Activated CD4-positive, alpha-beta memory T cell treated with anti-CD3 and anti-CD28 coated beads for 36 hours (primary cell): ENCODE measurements at regions of chr10 and their contacts with region 1.

Region 1: DNA sequence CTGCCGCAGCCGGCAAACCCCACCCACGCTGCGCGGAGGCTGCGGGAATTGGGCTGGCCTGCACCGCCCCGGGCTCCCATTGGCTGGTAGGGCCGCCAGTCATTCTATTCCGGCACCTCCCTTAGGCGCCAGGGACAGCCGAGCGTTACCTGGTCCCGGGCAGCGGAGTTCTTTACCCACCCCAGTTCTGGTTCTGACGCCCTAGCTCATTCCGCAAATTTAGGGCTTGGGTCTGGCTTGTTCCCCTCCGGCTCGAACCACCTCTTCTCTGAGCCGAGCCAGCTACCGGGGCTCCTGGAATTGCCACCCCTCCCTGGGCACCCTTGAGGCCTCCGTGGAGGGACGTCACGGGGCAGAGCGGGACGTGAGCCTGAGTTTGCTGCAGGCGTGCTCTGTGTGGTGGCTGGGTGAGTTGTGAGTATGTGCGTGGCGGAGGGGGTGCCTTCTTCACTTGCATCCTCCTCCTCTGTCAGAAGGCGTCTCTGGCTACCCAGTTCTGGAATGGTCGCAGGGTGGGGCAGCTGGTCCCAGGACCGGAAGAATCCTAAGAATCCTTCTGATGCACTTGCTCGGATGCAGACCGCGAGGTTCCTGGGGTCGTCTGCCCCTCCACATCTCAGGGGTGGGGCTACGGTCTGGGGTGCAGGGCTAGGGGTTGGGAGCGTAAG is at the starts of genes PDZD7 and SFXN3:
- DNase-seq: peak; percentile 98
- H3K4me3 Mint-ChIP-seq: peak within 1 kb of the TSS; percentile 79
- H3K27ac Mint-ChIP-seq: peak within 1 kb of the TSS; percentile 84
- H3K4me1 Mint-ChIP-seq: peaks cover 17% of the 10 kb centered on the region
- H3K27me3 Mint-ChIP-seq: no peaks in the 10 kb centered on the region
- total RNA-seq, gene PDZD7: 0.31 to 0.93 TPM
- total RNA-seq, gene SFXN3: 40.4 to 41.9 TPM

Region 2: GRCh38 chr10:100912605-100913469 is 118.4 kb before region 1 on chr10 and contains the start of gene SLF2:
- CTCF ChIA-PET with region 1: no interaction called
- POLR2A ChIA-PET with region 1: no interaction called
- intact Hi-C with region 1: loop called (anchors 5 kb)
- DNase-seq: peak; percentile 97
- H3K4me3 Mint-ChIP-seq: peak within 1 kb of the TSS; percentile 99
- H3K27ac Mint-ChIP-seq: peak within 1 kb of the TSS; percentile 99
- H3K4me1 Mint-ChIP-seq: peaks cover 47% of the 10 kb centered on the region
- H3K27me3 Mint-ChIP-seq: no peaks in the 10 kb centered on the region
- total RNA-seq, gene SLF2: 33.9 to 35.9 TPM

Region 3: DNA sequence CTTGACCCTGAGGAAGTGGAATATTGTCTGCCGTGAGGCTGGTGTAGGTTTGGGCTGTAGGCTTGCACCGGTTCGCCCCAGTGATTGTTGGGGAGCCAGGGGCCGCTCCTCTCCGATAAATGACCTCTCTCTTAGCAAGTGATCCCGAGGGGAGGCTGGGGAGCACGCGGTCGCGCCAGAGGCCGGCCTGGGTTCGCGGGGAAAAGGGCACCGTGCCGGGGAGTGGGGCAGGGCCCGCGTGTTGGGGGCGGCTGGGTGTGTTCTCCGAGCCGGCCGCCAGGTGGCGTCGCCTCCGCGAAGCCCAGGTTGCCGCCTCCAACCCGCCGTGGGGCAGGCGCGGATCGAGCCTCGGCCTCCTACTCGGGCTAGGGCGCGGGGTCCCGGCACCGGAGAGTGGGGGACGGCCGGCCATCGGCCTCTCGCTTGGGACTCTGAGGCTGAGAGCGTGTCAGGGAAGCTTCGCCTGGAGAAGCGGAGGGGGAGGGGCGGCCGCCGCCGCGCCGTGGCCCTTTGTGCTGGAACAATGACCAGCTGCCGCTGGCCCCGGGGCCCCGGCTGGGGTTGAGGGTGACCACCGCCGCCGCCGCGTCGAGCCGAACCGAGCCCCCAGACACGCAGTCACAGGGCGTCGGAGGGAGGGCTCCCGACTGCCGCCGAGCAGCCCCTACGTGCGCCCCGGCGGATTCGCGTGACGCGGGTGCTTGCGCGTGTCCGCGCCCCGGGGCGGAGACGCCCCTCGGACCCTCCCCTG is 32.1 kb before region 1 on chr10:
- CTCF ChIA-PET with region 1: interaction called, 28 read pairs
- POLR2A ChIA-PET with region 1: interaction called, 6 read pairs
- intact Hi-C with region 1: loop called (anchors 1 kb)
- DNase-seq: peak; percentile 81
- H3K4me3 Mint-ChIP-seq: peak overlapping the region; percentile 76
- H3K27ac Mint-ChIP-seq: peak overlapping the region; percentile 79
- H3K4me1 Mint-ChIP-seq: peaks cover 20% of the 10 kb centered on the region
- H3K27me3 Mint-ChIP-seq: no peaks in the 10 kb centered on the region

Region 4: DNA sequence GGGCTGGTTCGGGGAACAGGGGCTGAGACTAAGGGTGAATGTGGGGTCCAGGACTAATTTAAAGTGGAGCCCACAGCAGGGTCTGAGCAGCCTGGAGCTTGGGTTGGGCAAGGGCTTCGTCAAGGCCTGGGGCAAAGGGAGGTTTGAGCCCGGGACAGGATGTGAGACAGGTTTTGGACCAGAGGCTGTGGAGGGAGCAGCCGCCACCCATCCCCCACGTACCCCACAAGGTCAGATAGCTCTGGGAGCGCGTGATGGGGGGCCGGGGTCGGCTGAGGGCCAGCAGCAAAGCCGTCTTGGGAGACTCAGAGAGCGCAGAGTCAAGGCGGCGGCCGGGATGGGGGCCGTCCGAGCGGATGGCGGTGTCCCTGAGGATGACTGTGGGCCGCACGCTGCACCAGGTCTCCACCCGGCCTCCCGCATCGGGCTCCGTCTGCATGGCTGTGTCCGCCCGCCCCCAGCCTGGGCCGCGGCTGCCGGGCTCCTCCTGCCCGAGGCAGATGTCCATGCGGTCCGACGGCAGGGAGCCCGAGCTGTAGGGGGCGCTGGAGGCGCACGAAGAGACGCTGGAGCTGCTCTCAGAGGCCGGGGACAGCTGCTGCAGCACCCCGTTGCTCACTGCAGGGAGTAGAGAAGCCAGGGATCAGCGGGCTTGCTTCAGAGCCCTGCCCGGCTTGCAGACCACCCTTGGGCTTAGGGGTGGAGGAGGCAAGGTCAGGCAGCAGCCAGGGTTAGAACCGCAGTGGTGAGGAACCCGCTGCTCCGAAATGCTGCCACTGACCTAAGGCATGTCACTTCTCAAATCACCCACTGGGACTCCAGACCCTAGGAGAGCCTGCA is 12.4 kb before region 1 on chr10:
- CTCF ChIA-PET with region 1: interaction called, 137 read pairs
- POLR2A ChIA-PET with region 1: interaction called, 11 read pairs
- intact Hi-C with region 1: no loop called
- DNase-seq: peak; percentile 89
- H3K4me3 Mint-ChIP-seq: no peak overlapping the region
- H3K27ac Mint-ChIP-seq: no peak overlapping the region
- H3K4me1 Mint-ChIP-seq: peaks cover 15% of the 10 kb centered on the region
- H3K27me3 Mint-ChIP-seq: peaks cover 38% of the 10 kb centered on the region

Region 5: DNA sequence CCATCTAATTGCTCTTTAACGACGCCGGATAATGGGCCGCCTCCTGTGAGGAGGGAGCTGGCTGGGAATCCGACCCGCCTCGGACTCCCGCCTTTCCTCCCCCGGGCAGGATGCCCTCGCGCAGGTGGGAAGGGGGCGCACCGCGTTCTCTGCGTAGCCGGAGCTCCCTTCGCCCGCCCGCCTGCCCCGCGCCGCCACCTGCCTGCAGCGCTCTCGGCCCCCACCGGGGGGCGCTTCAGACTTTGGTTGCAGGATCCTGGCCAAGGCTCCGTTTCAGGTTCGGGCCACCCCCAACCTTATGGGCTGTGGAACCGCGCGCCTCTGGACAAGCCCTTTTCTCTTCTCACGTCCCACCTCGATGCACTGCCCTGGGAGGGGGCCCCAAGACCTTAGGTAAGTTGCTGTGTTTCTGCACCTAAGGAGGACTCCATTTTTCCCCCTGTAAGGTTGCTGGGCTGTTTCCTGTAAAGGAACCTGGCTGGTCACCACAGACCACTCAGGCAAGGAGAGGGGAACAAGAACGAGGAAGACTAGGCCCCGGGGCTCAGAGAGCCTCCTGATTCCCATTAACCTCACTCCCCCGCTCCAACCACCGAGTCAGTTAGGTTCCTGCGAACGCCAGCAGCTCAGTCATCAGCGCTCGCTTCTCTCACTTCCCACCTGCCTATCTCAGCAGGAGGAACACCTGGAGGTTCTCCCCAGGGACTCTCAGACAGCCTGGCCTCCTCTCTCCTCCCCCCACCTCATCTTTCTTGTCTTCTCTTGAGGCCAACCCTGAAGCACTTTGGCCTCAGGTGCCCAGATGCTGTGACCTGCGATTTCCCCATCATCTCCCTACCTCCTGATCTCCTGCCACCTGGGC is 19.2 kb after region 1 on chr10:
- CTCF ChIA-PET with region 1: interaction called, 25 read pairs
- POLR2A ChIA-PET with region 1: no interaction called
- intact Hi-C with region 1: no loop called
- DNase-seq: peak; percentile 84
- H3K4me3 Mint-ChIP-seq: no peak overlapping the region
- H3K27ac Mint-ChIP-seq: no peak overlapping the region
- H3K4me1 Mint-ChIP-seq: peaks cover 15% of the 10 kb centered on the region
- H3K27me3 Mint-ChIP-seq: peaks cover 47% of the 10 kb centered on the region